ENCODE measurements at regions of chr1 and their contacts with region 1.

Region 1: DNA sequence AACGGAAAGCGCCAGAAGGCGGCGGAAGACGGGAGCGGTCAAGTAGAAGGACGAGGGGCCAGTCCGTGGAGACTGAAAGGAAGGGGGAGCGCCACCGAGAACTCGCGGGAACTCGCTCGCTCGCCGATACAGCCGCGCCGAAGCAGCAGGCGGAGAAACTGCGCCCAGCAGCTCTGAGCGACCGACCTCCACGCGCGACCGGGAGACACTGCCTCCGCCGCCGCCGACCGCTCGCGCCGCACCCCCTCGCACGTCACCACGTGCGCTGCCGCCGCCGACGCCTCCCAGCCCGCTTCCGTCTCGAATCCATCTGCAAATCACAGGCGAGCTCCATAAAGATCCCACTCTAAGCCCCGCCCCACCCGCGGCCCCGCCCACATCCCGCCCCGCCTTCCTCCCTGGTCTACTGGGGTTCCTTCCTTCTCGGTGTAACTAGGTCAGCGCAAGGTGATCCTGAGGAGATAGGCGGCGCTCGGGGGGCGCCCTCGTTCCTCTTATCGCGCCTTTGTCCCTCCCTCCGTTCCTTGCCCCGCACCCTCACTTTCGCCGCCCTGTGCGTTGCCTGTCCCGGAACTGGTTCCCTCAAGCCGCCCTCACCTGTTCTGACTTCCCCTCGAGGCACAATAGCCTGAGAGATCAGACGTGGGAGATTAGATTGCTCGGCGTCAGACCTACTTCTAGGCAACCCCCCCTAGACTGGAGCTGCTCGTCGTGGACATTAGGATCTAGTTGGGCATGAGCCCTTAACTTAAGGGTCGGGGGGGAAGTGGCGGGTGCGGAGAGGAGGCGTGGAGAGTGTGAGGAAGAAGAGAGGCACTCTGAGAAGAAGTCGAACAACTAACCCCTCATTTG is at the start of gene IVNS1ABP:
- DNase-seq: peak; percentile 98
- H3K4me3 Mint-ChIP-seq: peak within 1 kb of the TSS; percentile 95
- H3K27ac Mint-ChIP-seq: peak within 1 kb of the TSS; percentile 95
- H3K4me1 Mint-ChIP-seq: peaks cover 39% of the 10 kb centered on the region
- H3K27me3 Mint-ChIP-seq: no peaks in the 10 kb centered on the region
- total RNA-seq, gene IVNS1ABP: 186 and 187 TPM in 2 replicates

Region 2: DNA sequence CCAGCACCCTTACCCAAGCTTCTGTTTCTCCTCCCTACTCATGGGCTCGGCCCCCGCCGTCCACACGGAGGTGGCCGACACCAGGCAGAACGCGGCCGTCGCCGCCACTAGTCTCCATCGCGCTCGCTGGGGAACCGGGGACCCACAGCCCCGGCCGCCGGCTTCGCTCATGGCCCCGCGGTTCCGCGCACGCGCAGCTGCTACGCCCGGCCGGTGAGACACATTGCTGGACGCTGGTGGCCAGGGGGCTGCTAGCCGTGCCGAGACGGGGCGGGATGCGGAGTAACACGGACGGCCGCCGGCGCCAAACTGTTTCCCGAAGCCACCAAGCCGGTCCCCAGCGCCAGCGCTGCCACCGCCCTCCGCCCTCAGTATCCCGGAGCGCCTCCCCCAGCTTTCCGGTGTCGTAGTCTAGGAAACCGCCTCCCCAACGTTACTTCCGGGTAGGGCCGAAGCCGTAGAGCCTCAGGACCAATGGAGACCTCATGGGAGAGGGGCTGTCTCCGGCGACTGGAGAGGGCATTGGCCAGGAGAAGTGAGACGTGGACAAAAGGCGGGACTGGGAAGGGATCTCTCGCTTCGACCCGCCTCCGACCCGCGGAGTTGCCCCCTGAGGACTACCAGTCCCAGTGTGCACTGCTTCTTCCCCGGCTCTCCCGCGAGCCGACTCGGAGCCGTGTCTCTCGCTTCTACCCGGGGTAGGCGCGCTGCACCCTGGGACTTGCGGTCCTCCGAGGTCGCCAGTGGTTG is 562.6 kb before region 1 on chr1 and contains the start of gene EDEM3:
- intact Hi-C with region 1: loop called (anchors 1 kb)
- DNase-seq: peak; percentile 99
- H3K4me3 Mint-ChIP-seq: peak within 1 kb of the TSS; percentile 98
- H3K27ac Mint-ChIP-seq: peak within 1 kb of the TSS; percentile 96
- H3K4me1 Mint-ChIP-seq: peaks cover 23% of the 10 kb centered on the region
- H3K27me3 Mint-ChIP-seq: peaks cover 7% of the 10 kb centered on the region
- total RNA-seq, gene EDEM3: 23.6 and 28.3 TPM in 2 replicates

Region 3: DNA sequence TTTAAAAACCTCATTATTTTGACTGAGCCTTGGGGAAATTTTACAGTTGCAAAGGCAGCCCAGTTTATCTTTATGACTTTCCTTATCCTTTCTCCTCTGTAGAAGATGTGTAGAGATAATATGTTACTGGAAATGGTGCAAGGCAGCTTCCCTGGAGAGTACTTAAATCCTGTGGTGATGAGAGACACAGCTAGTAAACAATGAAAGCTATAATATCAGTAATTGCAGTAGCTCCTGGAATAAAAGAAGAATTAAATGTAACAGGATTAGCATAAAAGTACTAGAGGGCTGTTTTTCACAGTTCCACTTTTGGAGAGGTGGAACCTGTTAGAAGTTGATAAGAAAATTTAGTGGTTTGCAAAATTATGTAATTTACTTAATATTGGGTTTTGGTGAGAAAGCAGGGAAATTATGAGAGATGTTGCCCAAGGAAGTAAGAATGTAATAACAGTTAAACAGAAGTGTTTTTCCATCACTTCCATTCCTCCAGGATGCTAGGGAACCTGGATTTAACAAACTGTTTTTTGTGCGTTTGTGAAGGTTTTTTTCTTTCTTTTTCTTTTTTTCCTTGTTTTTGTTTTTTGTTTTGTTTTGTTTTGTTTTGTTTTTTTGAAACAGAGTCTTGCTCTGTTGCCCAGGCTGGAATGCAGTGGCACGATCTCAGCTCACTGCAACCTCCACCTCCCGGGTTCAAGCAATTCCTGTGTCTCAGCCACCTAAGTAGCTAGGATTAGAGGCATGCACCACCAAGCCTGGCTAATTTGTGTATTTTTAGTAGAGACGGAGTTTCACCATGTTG is 546.9 kb before region 1 on chr1:
- intact Hi-C with region 1: no loop called
- DNase-seq: no peak
- H3K4me3 Mint-ChIP-seq: no peak overlapping the region
- H3K27ac Mint-ChIP-seq: no peak overlapping the region
- H3K4me1 Mint-ChIP-seq: no peaks in the 10 kb centered on the region
- H3K27me3 Mint-ChIP-seq: peaks cover 16% of the 10 kb centered on the region

Region 4: GRCh38 chr1:184973272-184974055 is 343.8 kb before region 1 on chr1:
- intact Hi-C with region 1: loop called (anchors 1 kb)
- DNase-seq: no peak
- H3K4me3 Mint-ChIP-seq: peak overlapping the region; percentile 91
- H3K27ac Mint-ChIP-seq: peak overlapping the region; percentile 94
- H3K4me1 Mint-ChIP-seq: peaks cover 56% of the 10 kb centered on the region
- H3K27me3 Mint-ChIP-seq: peaks cover 19% of the 10 kb centered on the region

Region 5: GRCh38 chr1:185156854-185157598 is 160.2 kb before region 1 on chr1 and contains the starts of genes SWT1 and TRMT1L:
- intact Hi-C with region 1: loop called (anchors 1 kb)
- DNase-seq: peak; percentile 99
- H3K4me3 Mint-ChIP-seq: peak within 1 kb of the TSS; percentile 98
- H3K27ac Mint-ChIP-seq: peak within 1 kb of the TSS; percentile 98
- H3K4me1 Mint-ChIP-seq: peaks cover 55% of the 10 kb centered on the region
- H3K27me3 Mint-ChIP-seq: no peaks in the 10 kb centered on the region
- total RNA-seq, gene SWT1: 1.4 and 1.8 TPM in 2 replicates
- total RNA-seq, gene TRMT1L: 22.4 and 26.0 TPM in 2 replicates

Region 6: DNA sequence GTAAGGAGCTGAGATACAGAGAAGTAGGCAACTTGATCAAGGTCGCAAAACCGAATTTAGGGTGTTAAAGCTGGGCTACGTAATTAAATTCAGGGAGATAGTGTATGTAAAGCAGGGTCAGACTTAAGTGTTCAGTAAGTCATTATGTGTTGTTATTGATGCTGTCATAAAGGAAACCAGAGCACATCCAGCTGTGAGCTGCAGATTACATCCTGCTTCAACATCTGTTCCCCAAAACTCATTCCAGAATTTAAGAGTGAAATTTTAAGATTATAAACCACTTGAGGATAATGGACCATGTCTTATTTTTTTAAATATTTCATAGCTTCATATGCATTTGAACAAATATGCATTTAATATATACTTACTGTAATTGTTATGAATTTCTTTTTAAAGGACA is 50.0 kb before region 1 on chr1:
- intact Hi-C with region 1: no loop called
- DNase-seq: no peak
- H3K4me3 Mint-ChIP-seq: no peak overlapping the region
- H3K27ac Mint-ChIP-seq: no peak overlapping the region
- H3K4me1 Mint-ChIP-seq: peaks cover under 1% of the 10 kb centered on the region
- H3K27me3 Mint-ChIP-seq: no peaks in the 10 kb centered on the region

Region 7: DNA sequence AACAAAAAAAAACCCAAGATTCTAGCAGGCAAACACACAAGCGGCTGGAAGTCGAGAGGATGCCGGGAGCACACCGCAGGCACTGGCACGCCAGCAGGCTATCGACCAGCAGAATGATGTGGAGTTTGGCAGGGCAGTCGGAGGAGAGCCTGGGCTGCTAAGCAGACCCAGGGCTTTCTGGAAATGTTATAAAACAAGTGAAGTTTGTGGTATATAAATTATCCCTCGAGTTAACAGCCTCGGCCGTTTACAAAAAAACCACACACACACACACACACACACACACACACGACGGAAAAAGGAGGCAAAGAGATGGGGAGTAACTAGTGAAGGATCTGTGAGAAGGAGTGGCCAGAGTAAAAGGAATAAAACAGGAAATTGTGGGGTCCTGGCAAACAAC is 87.0 kb after region 1 on chr1:
- intact Hi-C with region 1: no loop called
- DNase-seq: no peak
- H3K4me3 Mint-ChIP-seq: peak overlapping the region; percentile 63
- H3K27ac Mint-ChIP-seq: peak overlapping the region; percentile 8
- H3K4me1 Mint-ChIP-seq: peaks cover 22% of the 10 kb centered on the region
- H3K27me3 Mint-ChIP-seq: no peaks in the 10 kb centered on the region

Region 8: GRCh38 chr1:185420588-185421081 is 103.4 kb after region 1 on chr1:
- intact Hi-C with region 1: loop called (anchors 1 kb)
- DNase-seq: peak; percentile 86
- H3K4me3 Mint-ChIP-seq: peak overlapping the region; percentile 74
- H3K27ac Mint-ChIP-seq: peak overlapping the region; percentile 92
- H3K4me1 Mint-ChIP-seq: peaks cover 62% of the 10 kb centered on the region
- H3K27me3 Mint-ChIP-seq: no peaks in the 10 kb centered on the region

Region 9: GRCh38 chr1:185526344-185527307 is 209.4 kb after region 1 on chr1:
- intact Hi-C with region 1: no loop called
- DNase-seq: no peak
- H3K4me3 Mint-ChIP-seq: no peak overlapping the region
- H3K27ac Mint-ChIP-seq: no peak overlapping the region
- H3K4me1 Mint-ChIP-seq: no peaks in the 10 kb centered on the region
- H3K27me3 Mint-ChIP-seq: no peaks in the 10 kb centered on the region

Region 10: DNA sequence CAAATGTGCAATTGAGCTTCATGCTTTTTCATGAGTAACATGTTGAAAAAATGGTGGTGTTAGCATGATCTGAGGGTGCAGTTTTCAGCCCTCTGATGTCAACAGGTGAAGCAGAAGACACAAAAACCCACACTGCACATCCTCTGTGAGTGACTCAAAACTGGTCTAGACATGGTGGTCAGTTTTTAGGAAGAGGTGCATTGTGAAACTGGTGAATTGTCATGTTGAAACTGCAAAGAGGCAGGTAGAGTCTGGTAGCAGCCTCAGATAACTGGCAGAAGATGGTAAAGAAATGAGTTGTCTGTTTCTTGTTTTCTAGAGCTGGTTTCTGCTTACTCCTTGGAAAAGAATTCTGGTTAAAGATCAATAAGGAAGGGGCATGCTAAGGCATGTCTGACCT is 319.6 kb after region 1 on chr1:
- intact Hi-C with region 1: loop called (anchors 1 kb)
- DNase-seq: peak; percentile 84
- H3K4me3 Mint-ChIP-seq: peak overlapping the region; percentile 18
- H3K27ac Mint-ChIP-seq: peak overlapping the region; percentile 92
- H3K4me1 Mint-ChIP-seq: peaks cover 20% of the 10 kb centered on the region
- H3K27me3 Mint-ChIP-seq: no peaks in the 10 kb centered on the region

Region 11: DNA sequence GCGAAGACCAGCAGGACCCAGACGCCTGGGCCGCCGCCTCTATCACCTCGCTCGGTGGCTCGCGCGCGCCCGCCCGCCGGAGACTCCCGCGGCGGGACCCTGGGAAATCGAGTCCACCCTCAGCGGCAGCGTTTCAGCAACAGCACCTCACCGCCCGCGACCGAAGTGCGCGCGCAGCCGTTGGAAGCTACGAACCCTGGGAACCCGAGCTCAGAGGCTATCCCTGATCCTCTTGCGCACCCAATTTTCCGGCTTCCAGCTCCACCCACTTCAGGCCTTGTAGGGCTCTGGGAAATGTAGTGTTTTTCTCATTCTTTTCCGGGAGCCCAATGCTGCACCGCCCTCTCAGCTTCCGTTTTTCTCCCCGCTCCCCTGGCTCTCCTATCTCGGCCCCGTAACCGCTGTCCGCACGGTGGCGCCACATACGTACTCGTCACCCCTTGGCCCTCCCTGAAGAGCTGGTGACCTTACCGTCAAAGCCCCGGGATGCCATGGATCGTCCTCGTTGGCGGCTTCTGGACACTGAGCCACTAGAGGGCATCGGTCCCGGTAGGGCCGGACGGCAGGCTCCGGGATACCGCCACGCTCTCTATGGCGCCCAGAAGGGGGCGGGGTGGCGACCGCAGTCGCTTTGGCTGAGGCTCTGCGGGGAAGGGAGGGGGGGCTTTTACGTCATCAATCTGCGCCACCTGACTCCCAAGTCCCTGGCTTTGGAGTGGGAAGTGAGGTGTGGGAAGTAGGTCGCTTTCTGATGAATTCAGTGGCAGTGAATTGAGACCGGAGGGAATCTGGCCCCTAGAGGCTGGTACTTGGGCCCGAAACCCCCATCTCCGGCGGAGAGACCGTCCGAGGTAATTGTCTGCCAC is 1058.1 kb after region 1 on chr1 and contains the starts of genes ODR4 and TPR:
- intact Hi-C with region 1: loop called (anchors 1 kb)
- DNase-seq: peak; percentile 99
- H3K4me3 Mint-ChIP-seq: peak within 1 kb of the TSS; percentile 100
- H3K27ac Mint-ChIP-seq: peak within 1 kb of the TSS; percentile 99
- H3K4me1 Mint-ChIP-seq: peaks cover 37% of the 10 kb centered on the region
- H3K27me3 Mint-ChIP-seq: no peaks in the 10 kb centered on the region
- total RNA-seq, gene ODR4: 15.6 and 20.0 TPM in 2 replicates
- total RNA-seq, gene TPR: 174 and 185 TPM in 2 replicates